Caco-2 (cell line): ENCODE measurements at regions of chr11 and their contacts with region 1.

Region 1: GRCh38 chr11:102891736-102892135 is 17.0 kb upstream of the MMP12 start:
- DNase-seq: no peak
- H3K4me3 ChIP-seq: no peak overlapping the region
- H3K4me3 Mint-ChIP-seq: no peak overlapping the region
- H3K27ac Mint-ChIP-seq: no peak overlapping the region
- H3K4me1 ChIP-seq: no peaks in the 10 kb centered on the region
- H3K4me1 Mint-ChIP-seq: no peaks in the 10 kb centered on the region
- H3K27me3 ChIP-seq: no peaks in the 10 kb centered on the region
- H3K27me3 Mint-ChIP-seq: peaks cover 5% of the 10 kb centered on the region
- CTCF ChIP-seq: no peak

Region 2: DNA sequence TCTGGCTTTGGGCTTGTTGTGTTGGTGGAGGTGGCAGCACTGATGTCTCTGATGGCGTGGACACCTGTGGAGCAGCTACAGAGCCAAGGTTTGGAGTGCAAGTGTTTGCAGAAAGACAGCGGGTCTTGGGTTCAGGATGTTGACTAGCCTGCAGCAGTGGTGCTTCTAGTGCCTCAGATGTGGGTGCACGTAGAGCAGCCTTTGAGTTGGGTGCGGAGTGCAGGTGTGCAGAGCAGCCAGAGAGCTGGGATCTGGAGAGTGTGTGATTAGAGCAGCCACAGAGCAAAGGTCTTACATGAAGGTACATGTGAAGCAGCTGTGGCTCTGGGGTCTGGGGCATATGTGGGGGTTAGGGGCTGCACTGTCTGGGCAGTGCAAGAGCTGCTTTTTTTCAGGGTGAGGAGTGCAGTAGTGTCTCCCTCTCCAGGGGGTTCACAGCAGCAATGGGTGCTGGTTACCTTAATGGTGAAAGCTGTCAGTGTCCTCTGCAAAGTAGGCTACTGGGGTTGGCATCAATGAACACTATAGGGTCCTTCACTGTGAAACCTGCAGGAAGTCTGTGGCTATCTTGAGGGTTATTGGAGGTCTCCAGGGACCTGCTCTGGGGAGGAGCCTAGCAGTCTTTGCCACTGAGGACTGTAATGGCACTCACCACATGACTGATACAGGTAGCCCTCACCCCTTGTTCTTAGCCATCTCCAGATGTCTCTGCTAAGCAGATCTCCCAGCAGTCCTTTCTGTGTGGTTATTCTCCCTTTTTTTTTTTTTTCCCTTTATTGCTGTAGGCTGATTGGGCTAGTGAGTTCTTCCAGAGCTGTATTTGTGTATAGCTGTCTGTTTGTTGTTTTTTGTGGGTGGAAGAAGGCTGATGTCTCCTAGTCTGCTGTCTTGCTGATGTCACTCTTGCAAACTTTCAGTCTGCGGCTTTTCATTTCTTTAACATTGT is 530.4 kb before region 1 on chr11:
- CTCF ChIA-PET with region 1: no interaction called
- POLR2A ChIA-PET with region 1: no interaction called
- intact Hi-C with region 1: no loop called
- DNase-seq: no peak
- H3K4me3 ChIP-seq: no peak overlapping the region
- H3K4me3 Mint-ChIP-seq: no peak overlapping the region
- H3K27ac Mint-ChIP-seq: no peak overlapping the region
- H3K4me1 ChIP-seq: 0 out of 2 replicates have a peak, but pooled peaks cover 4% of the 10 kb centered on the region
- H3K4me1 Mint-ChIP-seq: peaks cover 11% of the 10 kb centered on the region
- H3K27me3 ChIP-seq: no peaks in the 10 kb centered on the region
- H3K27me3 Mint-ChIP-seq: no peaks in the 10 kb centered on the region
- CTCF ChIP-seq: no peak

Region 3: GRCh38 chr11:102810945-102811660 is 80.6 kb before region 1 on chr11:
- CTCF ChIA-PET with region 1: no interaction called
- POLR2A ChIA-PET with region 1: no interaction called
- intact Hi-C with region 1: loop called (anchors 5 kb)
- DNase-seq: peak in 1 of 2 experiments; percentile 49
- H3K4me3 ChIP-seq: no peak overlapping the region
- H3K4me3 Mint-ChIP-seq: no peak overlapping the region
- H3K27ac Mint-ChIP-seq: no peak overlapping the region
- H3K4me1 ChIP-seq: no peaks in the 10 kb centered on the region
- H3K4me1 Mint-ChIP-seq: no peaks in the 10 kb centered on the region
- H3K27me3 ChIP-seq: no peaks in the 10 kb centered on the region
- H3K27me3 Mint-ChIP-seq: no peaks in the 10 kb centered on the region
- CTCF ChIP-seq: peak; percentile 71 to 78